ENCODE measurements at regions of chr13 and their contacts with region 1.

Region 1: DNA sequence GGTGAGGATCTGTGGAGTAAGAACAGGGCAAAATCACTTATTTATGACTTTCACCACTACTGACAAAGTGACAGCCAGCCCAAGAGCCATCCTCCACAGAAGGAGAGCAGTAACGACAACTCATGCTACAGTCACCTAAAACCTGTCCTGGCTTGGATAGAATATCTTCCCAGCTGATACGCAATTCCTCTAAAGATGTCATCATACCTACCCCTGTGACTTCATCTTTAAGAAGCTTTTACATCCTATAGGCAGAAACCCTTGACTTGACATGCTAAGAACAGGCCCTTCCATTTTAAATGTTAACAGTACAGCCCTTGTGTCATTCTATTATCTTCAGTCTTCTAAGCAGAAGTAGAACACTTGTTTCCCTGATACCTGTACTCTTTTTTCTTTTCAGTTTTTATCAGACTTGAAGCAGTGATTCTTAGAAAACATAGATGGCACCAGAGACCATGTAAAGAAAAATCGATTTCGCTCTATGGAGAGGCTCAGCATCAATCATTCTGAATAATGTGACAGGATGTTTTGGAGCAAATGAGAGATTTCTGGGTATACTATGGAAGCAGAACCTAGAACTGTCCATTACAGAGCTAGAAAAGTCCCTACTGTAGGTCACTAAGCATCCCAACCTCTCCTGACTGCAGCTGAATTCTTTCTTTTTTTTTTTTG is 20.1 kb downstream of the STOML3 start:
- DNase-seq: no peak
- ATAC-seq: no peak
- H3K4me3 ChIP-seq: no peak overlapping the region
- H3K27ac ChIP-seq: no peak overlapping the region
- H3K4me1 ChIP-seq: no peaks in the 10 kb centered on the region
- H3K27me3 ChIP-seq: no peaks in the 10 kb centered on the region
- CTCF ChIP-seq: no peak
- POLR2A ChIP-seq: no peak
- RAD21 ChIP-seq: no peak

Region 2: DNA sequence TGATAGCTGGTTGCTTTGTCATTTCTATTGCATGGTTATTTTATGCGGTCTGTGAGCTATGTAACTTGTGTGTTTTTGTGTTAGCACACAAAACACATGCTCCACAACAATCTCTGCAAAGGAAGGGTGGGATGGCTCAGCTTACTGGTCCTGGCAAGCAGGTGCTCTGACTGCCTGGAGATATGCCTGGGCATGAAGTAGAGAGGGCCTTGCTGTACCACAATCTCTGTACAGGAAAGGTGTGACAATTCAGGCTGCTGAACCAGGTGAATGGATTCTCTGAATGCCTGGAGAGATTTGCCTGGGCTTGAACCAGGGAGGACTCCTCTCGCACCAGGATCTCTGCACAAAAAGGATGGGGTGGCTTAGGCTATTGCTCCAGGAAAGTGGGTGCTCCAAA is 49.4 kb before region 1 on chr13:
- CTCF ChIA-PET with region 1: no interaction called
- POLR2A ChIA-PET with region 1: no interaction called
- dilution Hi-C with region 1: no loop called
- in situ Hi-C with region 1: no loop called
- intact Hi-C with region 1: no loop called
- DNase-seq: no peak
- ATAC-seq: no peak
- H3K4me3 ChIP-seq: no peak overlapping the region
- H3K27ac ChIP-seq: no peak overlapping the region
- H3K4me1 ChIP-seq: no peaks in the 10 kb centered on the region
- H3K27me3 ChIP-seq: no peaks in the 10 kb centered on the region
- CTCF ChIP-seq: no peak
- POLR2A ChIP-seq: no peak
- RAD21 ChIP-seq: no peak

Region 3: DNA sequence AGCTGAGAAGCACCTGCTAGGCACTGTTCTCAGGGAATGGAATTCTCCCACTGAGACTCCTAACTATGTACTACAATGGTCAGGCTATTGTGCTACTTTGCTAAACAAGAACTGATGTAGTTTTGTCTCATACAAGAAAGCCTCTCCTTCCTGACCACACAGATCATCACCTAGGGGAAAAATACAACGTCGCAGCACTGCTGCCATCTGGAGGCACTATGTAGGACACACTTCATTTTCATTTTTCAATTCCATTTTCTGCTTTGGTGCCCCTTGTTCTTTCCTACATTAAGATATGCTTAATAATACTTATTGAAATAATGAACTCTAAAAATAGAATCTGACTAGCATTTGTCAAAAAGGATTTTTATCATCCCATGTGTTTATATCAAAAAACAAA is 46.3 kb after region 1 on chr13:
- CTCF ChIA-PET with region 1: no interaction called
- POLR2A ChIA-PET with region 1: interaction called, 11 read pairs
- dilution Hi-C with region 1: no loop called
- in situ Hi-C with region 1: no loop called
- intact Hi-C with region 1: no loop called
- DNase-seq: peak; percentile 8
- ATAC-seq: no peak; the same call in 1 of the 2 replicates
- H3K4me3 ChIP-seq: no peak overlapping the region
- H3K27ac ChIP-seq: no peak overlapping the region
- H3K4me1 ChIP-seq: no peaks in the 10 kb centered on the region
- H3K27me3 ChIP-seq: no peaks in the 10 kb centered on the region
- CTCF ChIP-seq: peak; percentile 23; the same call in 1 of the 2 replicates
- POLR2A ChIP-seq: no peak
- RAD21 ChIP-seq: no peak